ENCODE measurements at regions of chr7 and their contacts with region 1.

Region 1: GRCh38 chr7:142632291-142633134 is 116.8 kb upstream of the PRSS1 start:
- DNase-seq: peak; percentile 44
- ATAC-seq: peak; percentile 97
- H3K4me3 Mint-ChIP-seq: no peak overlapping the region
- H3K27ac Mint-ChIP-seq: no peak overlapping the region
- H3K4me1 Mint-ChIP-seq: peaks cover 2% of the 10 kb centered on the region
- H3K27me3 Mint-ChIP-seq: peaks cover 16% of the 10 kb centered on the region
- CTCF ChIP-seq: peak; percentile 89

Region 2: DNA sequence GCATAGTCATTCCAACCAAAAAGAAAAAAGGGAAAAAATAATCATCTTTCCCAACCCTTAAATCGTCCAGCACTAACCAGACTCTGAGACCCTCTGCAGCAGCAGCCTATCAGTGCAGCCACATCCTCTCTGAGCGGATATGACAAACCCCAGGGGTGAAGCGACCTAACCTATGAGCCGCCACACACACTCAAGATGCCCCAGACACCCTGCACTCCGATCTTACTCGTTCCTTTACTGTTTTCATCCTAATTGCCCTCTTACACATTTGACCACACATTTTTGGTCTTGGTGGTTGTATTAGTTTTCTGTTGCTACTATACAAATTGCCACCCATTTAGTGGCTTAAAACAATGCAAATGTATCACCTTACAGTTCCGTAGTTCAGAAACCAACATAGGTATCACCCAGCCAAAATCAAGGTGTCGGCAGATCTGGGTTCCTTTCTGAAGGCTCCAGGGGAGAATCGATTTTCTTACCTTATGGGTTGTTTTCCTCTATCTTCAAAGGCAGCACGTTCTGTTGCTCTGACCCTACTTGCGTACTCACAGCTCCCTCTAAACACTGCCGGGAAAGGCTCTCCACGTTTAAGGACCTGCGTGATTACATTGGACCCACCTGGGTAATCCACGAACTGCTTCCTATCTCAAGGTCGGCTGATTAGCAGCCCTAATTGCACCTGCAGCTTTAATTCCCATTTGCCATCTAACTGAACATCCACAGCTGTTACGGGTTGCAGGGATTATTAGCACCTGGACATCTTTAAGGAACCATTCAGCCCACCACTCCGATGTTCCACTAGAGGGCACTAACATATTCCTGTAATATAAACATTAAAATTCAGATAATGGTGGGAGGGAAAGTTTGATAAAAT is 79.5 kb after region 1 on chr7:
- CTCF ChIA-PET with region 1: interaction called, 27 read pairs
- POLR2A ChIA-PET with region 1: no interaction called
- intact Hi-C with region 1: loop called (anchors 1 kb)
- DNase-seq: no peak
- ATAC-seq: peak; percentile 25
- H3K4me3 Mint-ChIP-seq: peak overlapping the region; percentile 63
- H3K27ac Mint-ChIP-seq: no peak overlapping the region
- H3K4me1 Mint-ChIP-seq: peaks cover 27% of the 10 kb centered on the region
- H3K27me3 Mint-ChIP-seq: no peaks in the 10 kb centered on the region
- CTCF ChIP-seq: no peak

Region 3: DNA sequence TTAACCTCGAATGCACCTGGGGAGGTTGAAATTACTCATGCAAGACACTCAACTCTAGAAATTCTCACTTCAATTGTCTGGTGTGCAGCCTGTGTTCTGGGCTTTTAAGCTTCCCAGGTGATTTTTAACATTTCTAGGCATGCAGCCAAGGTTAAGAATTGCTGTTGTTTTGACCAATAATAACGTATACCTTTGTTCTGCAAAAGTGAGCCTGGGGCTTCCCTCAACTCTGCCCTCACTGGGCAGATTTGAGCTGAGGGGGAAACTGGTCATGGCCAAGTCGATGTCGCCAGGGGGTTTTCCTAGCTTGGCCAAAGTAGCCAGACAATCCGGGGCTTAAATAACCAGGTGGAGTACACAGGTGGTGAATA is 138.8 kb after region 1 on chr7:
- CTCF ChIA-PET with region 1: no interaction called
- POLR2A ChIA-PET with region 1: no interaction called
- intact Hi-C with region 1: no loop called
- DNase-seq: no peak
- ATAC-seq: peak; percentile 85
- H3K4me3 Mint-ChIP-seq: peak overlapping the region; percentile 32
- H3K27ac Mint-ChIP-seq: no peak overlapping the region
- H3K4me1 Mint-ChIP-seq: peaks cover 23% of the 10 kb centered on the region
- H3K27me3 Mint-ChIP-seq: peaks cover 9% of the 10 kb centered on the region
- CTCF ChIP-seq: no peak

Region 4: DNA sequence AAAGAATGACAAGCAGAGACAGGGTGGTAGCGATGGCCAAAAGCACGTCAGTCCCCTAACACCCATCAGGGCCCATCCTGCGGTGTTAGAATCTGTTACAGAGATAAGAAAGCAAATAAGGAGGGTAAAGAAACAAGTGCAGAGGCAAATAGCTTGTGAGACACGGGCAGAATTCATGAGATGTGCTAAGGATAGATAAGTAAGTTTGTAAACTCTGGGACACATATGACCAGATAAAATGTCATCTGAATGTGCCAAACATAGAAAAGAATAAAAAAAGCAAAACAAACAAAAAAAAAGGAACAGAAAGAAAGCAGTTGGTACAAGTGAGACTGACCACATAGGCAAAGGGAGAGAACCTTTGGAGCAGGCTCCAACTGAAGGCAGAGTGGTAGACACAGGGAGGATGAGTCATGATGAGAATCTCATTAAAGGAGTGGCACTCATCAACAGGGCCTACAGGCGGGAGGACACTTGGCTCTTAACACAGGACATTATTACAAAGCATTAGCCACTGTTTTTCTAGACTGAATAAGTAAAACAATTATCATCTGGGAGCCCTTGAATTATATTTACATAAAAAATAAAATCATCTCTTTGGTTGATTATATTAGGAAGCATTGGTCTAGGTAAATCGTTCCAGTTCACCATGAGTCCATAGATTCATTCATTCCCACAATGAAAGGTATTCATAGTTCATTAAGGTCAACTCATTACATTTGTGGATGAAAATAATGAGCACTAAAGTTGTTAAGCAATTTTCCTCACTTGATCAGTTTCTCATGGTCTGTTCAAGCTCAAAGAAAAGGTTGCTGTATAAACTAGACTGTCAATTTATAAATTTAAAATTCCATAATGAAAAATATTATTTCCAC is 200.9 kb after region 1 on chr7:
- CTCF ChIA-PET with region 1: interaction called, 10 read pairs
- POLR2A ChIA-PET with region 1: no interaction called
- intact Hi-C with region 1: no loop called
- DNase-seq: no peak
- ATAC-seq: no peak
- H3K4me3 Mint-ChIP-seq: no peak overlapping the region
- H3K27ac Mint-ChIP-seq: no peak overlapping the region
- H3K4me1 Mint-ChIP-seq: peaks cover 20% of the 10 kb centered on the region
- H3K27me3 Mint-ChIP-seq: no peaks in the 10 kb centered on the region
- CTCF ChIP-seq: no peak

Region 5: DNA sequence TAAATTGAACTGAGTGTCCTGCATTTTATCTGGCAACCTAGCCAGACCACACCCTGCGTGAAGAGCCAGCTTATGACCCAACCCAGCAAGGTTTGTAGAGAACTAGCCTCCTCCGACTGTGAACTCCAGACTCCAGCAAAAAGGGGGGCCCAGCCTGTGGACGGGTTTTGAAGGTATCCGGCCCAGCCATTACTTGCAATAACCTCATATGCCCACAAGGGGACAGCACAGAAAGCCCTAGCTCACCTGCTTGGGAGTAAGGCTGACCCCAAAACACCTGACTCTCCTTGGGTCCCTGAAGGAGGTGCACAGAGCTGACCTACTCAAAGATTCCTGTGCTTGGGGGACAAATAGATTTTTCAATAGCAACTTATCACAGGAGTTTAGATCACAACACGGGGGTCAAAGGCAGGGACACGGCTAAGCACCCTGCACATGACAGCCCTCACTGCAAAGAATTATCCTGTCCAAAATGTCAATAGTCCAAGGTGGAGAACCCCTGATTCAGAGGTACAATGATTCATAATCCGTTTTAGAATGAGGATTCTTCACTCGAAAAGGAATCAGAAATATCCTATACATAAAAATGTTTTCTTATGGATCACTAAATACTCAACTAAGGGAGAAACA is 248.5 kb after region 1 on chr7:
- CTCF ChIA-PET with region 1: no interaction called
- POLR2A ChIA-PET with region 1: no interaction called
- intact Hi-C with region 1: loop called (anchors 1 kb)
- DNase-seq: no peak
- ATAC-seq: peak; percentile 79
- H3K4me3 Mint-ChIP-seq: no peak overlapping the region
- H3K27ac Mint-ChIP-seq: no peak overlapping the region
- H3K4me1 Mint-ChIP-seq: no peaks in the 10 kb centered on the region
- H3K27me3 Mint-ChIP-seq: peaks cover 15% of the 10 kb centered on the region
- CTCF ChIP-seq: peak; percentile 43

Region 6: GRCh38 chr7:143214789-143215679 is 582.5 kb after region 1 on chr7:
- CTCF ChIA-PET with region 1: interaction called, 27 read pairs
- POLR2A ChIA-PET with region 1: no interaction called
- intact Hi-C with region 1: loop called (anchors 1 kb)
- DNase-seq: no peak
- ATAC-seq: peak; percentile 97
- H3K4me3 Mint-ChIP-seq: no peak overlapping the region
- H3K27ac Mint-ChIP-seq: no peak overlapping the region
- H3K4me1 Mint-ChIP-seq: peaks cover 16% of the 10 kb centered on the region
- H3K27me3 Mint-ChIP-seq: peaks cover 2% of the 10 kb centered on the region
- CTCF ChIP-seq: peak; percentile 99

Region 7: GRCh38 chr7:144565586-144565985 is 1933.1 kb after region 1 on chr7:
- CTCF ChIA-PET with region 1: no interaction called
- POLR2A ChIA-PET with region 1: no interaction called
- intact Hi-C with region 1: no loop called
- DNase-seq: no peak
- ATAC-seq: no peak
- H3K4me3 Mint-ChIP-seq: no peak overlapping the region
- H3K27ac Mint-ChIP-seq: no peak overlapping the region
- H3K4me1 Mint-ChIP-seq: no peaks in the 10 kb centered on the region
- H3K27me3 Mint-ChIP-seq: no peaks in the 10 kb centered on the region
- CTCF ChIP-seq: no peak

Measured in activated B cell treated with CpG ODN at 0.5 μM for 24 hours (primary cell).